ENCODE measurements at regions of chr10 and their contacts with region 1.

Region 1: DNA sequence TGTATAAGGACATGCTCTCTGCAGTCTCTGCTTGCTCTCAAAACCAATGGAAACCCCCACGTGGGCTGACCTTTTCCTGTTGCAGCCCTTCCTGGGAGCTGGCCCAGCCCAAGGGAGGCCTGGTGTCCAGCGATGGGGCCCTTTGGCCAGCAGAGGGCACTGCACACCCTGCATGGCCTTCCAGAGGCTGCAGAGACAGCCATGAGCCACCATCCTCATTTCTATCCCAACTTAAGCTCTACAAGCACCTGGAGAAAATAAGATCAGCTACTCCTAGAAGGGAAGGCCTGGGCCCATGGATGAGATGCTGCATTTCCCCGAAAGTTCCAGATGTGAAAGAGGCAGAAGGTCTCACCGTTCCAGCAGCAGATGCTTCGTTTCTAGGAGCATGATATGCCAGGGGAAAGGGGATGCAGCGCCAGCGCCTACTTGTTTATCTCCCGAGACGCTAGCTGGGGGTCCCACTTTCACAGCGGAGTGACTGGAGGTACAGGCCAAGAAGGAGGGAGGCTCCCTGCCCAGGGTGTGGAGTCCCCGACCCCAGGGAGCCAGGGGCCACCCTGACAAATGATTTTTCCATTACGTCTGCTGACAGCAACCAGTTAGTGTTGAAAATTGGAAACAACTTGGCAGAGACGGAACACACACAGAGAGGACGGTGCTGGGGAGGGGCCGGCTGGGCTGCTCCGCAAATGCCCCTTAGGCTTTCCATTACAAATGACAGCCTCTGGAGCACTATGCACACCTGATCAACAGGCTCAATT is 106.4 kb downstream of the ZRANB1 start:
- DNase-seq: peak; percentile 83 to 93 (median 90)
- ATAC-seq: peak; percentile 91 to 95 (median 94)
- H3K4me3 ChIP-seq: no peak overlapping the region
- H3K27ac ChIP-seq: peak overlapping the region in 8 of 12 donors; percentile 1 to 50 (median 35)
- H3K4me1 ChIP-seq: peaks cover 6 to 82% (median 49%) of the 10 kb centered on the region in 12 donors
- H3K27me3 ChIP-seq: no peaks in the 10 kb centered on the region
- CTCF ChIP-seq: peak; percentile 96 to 99 (median 98)
- POLR2A ChIP-seq: no peak

Region 2: DNA sequence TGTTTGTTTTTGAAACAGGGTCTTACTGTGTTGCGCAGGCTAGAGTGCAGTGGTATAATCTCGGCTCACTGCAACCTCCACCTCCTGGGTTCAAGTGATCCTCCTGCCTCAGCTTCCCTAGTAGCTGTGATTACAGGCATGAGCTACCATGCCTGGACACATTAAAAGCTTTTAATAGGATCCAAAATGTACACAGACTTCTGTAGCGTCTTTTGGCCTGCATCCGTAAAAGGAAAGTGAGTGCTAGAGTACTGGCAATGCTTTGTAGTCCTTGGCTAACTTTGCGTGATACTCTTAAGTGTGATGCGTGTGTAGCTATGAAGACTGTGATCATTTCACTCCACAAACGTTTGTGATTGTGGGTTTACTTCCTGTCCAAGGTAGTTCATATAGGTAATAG is 93.0 kb before region 1 on chr10:
- intact Hi-C with region 1: no loop called
- DNase-seq: no peak
- ATAC-seq: peak in 2 of 4 donors; percentile 38 to 67
- H3K4me3 ChIP-seq: no peak overlapping the region
- H3K27ac ChIP-seq: peak overlapping the region in 1 of 12 donors; percentile 33
- H3K4me1 ChIP-seq: peaks cover 0 to 43% (median 32%) of the 10 kb centered on the region in 12 donors
- H3K27me3 ChIP-seq: no peaks in the 10 kb centered on the region
- CTCF ChIP-seq: no peak
- POLR2A ChIP-seq: no peak

Region 3: GRCh38 chr10:124992462-124993344 is 55.6 kb before region 1 on chr10:
- intact Hi-C with region 1: loop called in 2 of 10 experiments (anchors 5 to 10 kb)
- DNase-seq: peak in 4 of 5 donors; percentile 76 to 84 (median 82)
- ATAC-seq: peak; percentile 68 to 73 (median 71)
- H3K4me3 ChIP-seq: no peak overlapping the region
- H3K27ac ChIP-seq: peak overlapping the region in 4 of 12 donors; percentile 1 to 22 (median 14)
- H3K4me1 ChIP-seq: peaks cover 0 to 21% (median 5%) of the 10 kb centered on the region in 12 donors
- H3K27me3 ChIP-seq: no peaks in the 10 kb centered on the region
- CTCF ChIP-seq: peak; percentile 62 to 84 (median 81)
- POLR2A ChIP-seq: no peak

Region 4: GRCh38 chr10:125000366-125001312 is 47.6 kb before region 1 on chr10:
- intact Hi-C with region 1: loop called in 2 of 10 experiments (anchors 5 to 10 kb)
- DNase-seq: peak in 2 of 5 donors; percentile 8 to 52
- ATAC-seq: peak; percentile 27 to 51 (median 34)
- H3K4me3 ChIP-seq: no peak overlapping the region
- H3K27ac ChIP-seq: peak overlapping the region in 11 of 12 donors; percentile 24 to 86 (median 62)
- H3K4me1 ChIP-seq: peaks cover 0 to 67% (median 43%) of the 10 kb centered on the region in 12 donors
- H3K27me3 ChIP-seq: no peaks in the 10 kb centered on the region
- CTCF ChIP-seq: peak in 8 of 12 donors; percentile 8 to 41 (median 26)
- POLR2A ChIP-seq: no peak

Region 5: DNA sequence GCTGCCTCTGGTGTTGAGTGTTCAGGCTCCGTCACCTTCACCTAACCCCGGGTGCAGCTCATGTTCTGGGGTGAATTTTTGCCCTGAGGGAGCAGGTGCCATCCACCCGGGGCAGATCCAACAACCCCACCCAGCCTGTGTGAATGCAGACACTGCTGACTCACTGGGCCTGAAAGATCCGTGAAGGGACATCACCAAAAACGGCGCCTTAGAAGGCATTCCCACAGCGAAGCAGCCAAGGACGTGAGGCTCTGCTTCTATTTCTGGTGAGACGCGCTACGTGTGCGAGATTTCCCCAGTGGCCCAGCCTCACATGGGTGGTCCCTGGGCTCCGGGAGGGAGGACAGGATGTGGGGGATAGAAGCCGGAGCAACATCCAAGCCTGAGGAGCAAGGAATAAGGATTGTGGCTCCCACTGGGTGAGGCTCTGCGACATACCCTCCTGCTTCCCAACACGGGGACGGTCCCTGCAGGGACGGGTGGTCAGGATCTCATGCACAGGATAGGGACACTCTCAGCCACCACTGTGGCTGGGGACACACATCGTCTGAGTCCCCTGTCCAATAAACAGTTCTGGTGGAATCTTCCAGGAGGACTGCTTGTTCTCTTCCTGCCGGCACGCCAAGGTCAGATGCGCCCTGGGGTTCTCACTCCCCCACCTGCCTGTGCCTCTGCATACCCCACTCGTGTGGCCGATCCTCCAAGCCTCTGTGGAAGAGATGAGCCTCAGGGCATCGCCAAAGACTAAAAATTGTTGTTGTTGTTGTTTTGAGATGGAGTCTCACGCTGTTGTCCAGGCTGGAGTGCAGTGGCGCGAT is 36.2 kb before region 1 on chr10:
- intact Hi-C with region 1: no loop called
- DNase-seq: peak; percentile 66 to 78 (median 72)
- ATAC-seq: peak; percentile 29 to 63 (median 50)
- H3K4me3 ChIP-seq: no peak overlapping the region
- H3K27ac ChIP-seq: peak overlapping the region; percentile 19 to 81 (median 74)
- H3K4me1 ChIP-seq: peaks cover 22 to 94% (median 69%) of the 10 kb centered on the region in 12 donors
- H3K27me3 ChIP-seq: no peaks in the 10 kb centered on the region
- CTCF ChIP-seq: no peak
- POLR2A ChIP-seq: no peak

Region 6: DNA sequence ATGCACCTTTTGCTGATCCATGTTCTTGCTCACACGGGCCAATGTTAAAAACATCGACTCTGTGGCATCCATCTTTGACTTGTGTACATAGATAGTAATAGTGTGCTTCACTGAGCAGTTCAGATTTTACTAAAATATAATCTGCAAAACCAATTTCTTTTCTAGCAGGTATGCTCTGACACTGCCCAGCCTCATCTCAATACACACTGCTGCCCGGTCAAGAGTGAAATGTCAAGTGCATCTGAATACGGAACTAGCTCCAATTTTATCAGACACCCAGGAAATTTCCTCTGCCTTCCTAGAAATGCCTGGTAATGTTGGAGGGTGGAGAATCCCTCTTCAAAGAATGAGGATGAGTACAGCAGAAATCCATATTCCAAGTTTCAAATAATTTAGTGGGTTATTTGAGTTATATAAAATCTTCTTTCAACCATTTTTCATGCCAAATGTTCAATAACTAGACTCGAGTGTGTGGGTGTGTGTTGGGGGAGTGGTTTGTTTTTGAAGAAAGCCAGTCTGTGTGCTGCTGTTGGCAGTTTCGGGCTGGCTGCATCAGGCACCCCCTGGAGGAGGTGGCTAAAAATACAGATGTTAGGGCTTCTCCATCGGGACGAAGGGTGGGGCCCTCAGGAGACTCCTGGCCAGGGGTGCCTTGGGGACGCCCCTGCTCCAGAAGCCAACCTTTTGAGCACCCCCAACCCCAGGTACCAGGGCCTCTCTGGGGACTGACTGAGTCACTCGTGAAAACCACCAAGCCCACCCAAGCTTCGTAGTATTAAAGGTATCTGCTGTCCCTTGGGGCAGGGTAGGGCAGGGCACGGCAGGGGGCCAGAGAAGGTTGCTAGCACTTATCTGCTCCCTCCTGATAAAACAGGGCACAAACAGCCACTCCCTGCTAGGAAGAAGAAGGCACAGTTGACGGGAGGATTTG is 96.7 kb after region 1 on chr10:
- intact Hi-C with region 1: loop called in 2 of 10 experiments (anchors 5 kb)
- DNase-seq: peak in 2 of 5 donors; percentile 62 to 65
- ATAC-seq: peak; percentile 48 to 65 (median 58)
- H3K4me3 ChIP-seq: peak overlapping the region in 5 of 12 donors; percentile 11 to 30 (median 18)
- H3K27ac ChIP-seq: peak overlapping the region in 10 of 12 donors; percentile 8 to 68 (median 42)
- H3K4me1 ChIP-seq: peaks cover 21 to 91% (median 71%) of the 10 kb centered on the region in 12 donors
- H3K27me3 ChIP-seq: no peaks in the 10 kb centered on the region
- CTCF ChIP-seq: peak; percentile 17 to 61 (median 46)
- POLR2A ChIP-seq: no peak

Region 7: DNA sequence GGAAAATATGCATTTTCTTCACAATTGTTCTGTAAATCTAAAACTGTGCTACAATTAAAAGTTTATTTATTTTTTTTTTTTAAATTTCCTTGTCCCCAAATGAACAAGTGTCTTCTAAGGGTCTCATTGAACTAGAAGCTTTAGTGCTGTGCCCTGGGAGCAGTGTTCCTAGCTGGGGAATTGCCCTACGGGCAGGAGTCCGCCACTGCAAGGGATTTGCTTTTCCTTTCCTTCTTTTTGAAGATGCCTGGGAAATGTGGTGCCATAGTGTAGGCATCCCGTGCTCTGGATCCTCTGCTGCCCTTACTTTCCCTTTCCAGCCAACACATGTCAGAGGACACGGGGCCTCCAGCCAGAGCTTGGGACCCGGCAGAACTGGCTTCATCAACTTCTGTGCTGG is 289.2 kb after region 1 on chr10:
- intact Hi-C with region 1: loop called in 8 of 10 experiments (anchors 2 to 10 kb)
- DNase-seq: no peak
- ATAC-seq: no peak
- H3K4me3 ChIP-seq: no peak overlapping the region
- H3K27ac ChIP-seq: no peak overlapping the region
- H3K4me1 ChIP-seq: peaks cover 0 to 12% (median 0%) of the 10 kb centered on the region in 12 donors
- H3K27me3 ChIP-seq: no peaks in the 10 kb centered on the region
- CTCF ChIP-seq: no peak
- POLR2A ChIP-seq: no peak

Region 8: DNA sequence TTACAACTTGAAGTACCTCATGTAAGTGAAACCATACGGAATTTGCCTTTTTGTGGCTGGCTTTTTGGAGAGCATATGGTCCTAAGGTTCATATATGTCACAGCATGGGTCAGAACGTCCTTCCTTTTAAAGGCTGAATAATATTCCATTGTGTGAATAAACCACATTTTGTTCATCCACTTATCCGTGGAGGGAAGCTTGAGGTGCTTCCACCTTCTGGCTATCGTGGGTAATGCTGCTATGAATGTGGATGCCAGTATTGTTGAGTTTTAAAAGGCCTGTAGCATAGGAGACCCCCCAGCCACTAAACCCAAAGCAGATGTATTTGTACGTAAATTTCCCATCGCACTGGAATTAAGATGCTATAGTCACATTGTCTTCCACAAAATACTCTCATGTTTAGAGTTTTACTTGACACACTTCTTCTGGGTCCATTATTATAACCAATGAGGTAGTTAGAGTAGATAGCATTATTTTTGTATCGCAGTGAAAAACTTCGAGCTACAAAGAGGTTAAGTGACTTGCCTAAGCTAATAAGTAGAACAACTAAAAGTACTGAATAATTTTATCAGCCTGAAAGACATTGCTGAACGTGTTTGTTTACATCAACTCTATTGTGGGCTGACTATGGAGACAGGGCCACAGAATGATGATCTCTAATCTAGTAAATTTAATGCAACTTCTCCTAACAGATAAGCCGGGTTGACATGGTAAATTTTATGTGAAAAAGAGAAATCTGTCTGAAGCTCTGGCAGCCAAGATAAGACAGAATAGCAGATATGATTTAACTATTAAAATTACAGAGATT is 295.0 kb after region 1 on chr10:
- intact Hi-C with region 1: loop called in 8 of 10 experiments (anchors 2 to 10 kb)
- DNase-seq: no peak
- ATAC-seq: peak in 1 of 4 donors; percentile 7
- H3K4me3 ChIP-seq: no peak overlapping the region
- H3K27ac ChIP-seq: no peak overlapping the region
- H3K4me1 ChIP-seq: no peaks in the 10 kb centered on the region
- H3K27me3 ChIP-seq: peaks cover 0 to 3% (median 0%) of the 10 kb centered on the region in 9 donors
- CTCF ChIP-seq: peak; percentile 48 to 76 (median 60)
- POLR2A ChIP-seq: no peak

Measured in heart left ventricle (tissue), 16 donors.